H1 (cell line): ENCODE measurements at regions of chr17 and their contacts with region 1.

Region 1: DNA sequence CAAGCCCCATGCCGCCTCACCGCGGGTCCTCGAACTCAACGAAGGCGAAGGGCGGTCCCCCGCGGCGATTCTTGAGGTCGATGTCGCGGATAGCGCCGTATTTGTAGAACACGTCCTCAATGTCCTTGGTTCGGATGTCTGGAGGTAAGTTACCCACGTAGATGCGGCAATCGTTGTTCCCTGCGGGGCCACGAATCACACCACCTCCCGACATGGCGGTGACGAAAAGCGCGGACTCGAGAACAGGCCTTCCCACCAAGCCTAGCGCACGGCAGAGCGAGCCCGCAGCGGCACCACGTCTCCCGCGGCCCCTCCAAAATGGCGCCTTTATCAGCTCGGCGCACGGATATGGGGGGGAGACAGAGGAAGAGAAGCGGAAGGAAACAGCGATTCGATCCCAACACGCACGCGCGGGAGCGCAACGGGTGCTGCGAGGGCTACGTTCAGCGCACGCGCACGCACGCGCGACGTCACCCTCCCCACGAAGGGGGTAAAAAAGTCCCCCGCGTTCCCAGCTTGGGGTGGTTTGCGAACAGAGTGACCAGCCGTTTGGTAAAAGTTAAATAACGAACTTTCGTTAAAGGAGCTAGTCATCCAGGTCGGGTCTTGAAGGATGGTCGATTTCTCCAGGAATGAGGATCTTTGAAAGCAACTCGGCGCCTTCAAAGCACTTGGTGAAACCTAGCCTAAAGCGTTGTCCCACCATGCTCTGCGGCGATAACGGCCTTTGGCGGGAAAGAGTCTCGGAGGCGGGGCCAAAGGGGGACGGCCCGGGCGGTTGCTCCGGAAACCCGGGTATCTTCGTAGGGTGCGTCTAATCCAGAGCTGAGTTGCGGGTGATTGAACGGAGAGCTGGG is at the start of gene SRSF1:
- DNase-seq: peak; percentile 87 to 95
- H3K4me3 ChIP-seq: peak within 1 kb of the TSS; percentile 87 to 98 (median 94)
- H3K27ac ChIP-seq: peak within 1 kb of the TSS; percentile 100
- H3K4me1 ChIP-seq: peaks cover 0 to 11% (median 5%) of the 10 kb centered on the region in 4 experiments; a peak in 4 of 7 replicates
- H3K27me3 ChIP-seq: no peaks in the 10 kb centered on the region
- CTCF ChIP-seq: no peak
- EP300 ChIP-seq: peak; percentile 20 to 38; a peak in 1 of 3 replicates
- POLR2A ChIP-seq: peak; percentile 85 to 92
- RAD21 ChIP-seq: no peak; a peak in 1 of 4 replicates
- total RNA-seq, gene SRSF1: 429 and 433 TPM in 2 replicates

Region 2: GRCh38 chr17:57849874-57850754 is 157.0 kb before region 1 on chr17 and contains the start of gene MRPS23:
- CTCF ChIA-PET with region 1: interaction called, 384 read pairs
- POLR2A ChIA-PET with region 1: interaction called, 672 read pairs
- DNase-seq: peak; percentile 90 to 96
- H3K4me3 ChIP-seq: peak within 1 kb of the TSS; percentile 89 to 98 (median 94)
- H3K27ac ChIP-seq: peak within 1 kb of the TSS; percentile 63
- H3K4me1 ChIP-seq: peaks cover 0 to 7% (median 3%) of the 10 kb centered on the region in 4 experiments; a peak in 3 of 7 replicates
- H3K27me3 ChIP-seq: no peaks in the 10 kb centered on the region
- CTCF ChIP-seq: no peak
- EP300 ChIP-seq: peak in 1 of 2 experiments; percentile 92; a peak in 1 of 3 replicates
- POLR2A ChIP-seq: peak in 1 of 2 experiments; percentile 68; a peak in 2 of 3 replicates
- RAD21 ChIP-seq: no peak
- total RNA-seq, gene MRPS23: 60.4 and 73.4 TPM in 2 replicates

Region 3: DNA sequence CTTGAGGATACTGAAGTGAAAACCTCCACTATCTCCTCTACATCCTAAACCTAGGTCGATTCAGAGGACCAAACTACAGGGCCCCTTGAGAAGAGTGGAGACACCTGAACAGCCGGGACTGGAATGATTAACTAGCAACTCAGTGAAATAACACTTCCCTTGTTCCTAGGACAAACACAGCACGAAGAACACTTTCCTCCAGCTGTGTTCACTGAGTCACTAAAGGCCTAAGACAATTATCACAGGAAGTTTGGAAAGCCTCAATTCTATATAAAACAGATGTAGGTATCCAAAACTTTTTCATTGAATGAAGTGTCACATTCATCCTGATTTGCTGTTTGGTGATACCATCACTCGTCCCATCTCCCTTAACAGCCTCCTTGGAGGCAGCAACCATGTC is 36.4 kb before region 1 on chr17:
- CTCF ChIA-PET with region 1: no interaction called
- POLR2A ChIA-PET with region 1: interaction called, 11 read pairs
- DNase-seq: no peak
- H3K4me3 ChIP-seq: no peak overlapping the region
- H3K27ac ChIP-seq: no peak overlapping the region
- H3K4me1 ChIP-seq: peaks cover 0 to 3% (median 0%) of the 10 kb centered on the region in 4 experiments; a peak in 3 of 7 replicates
- H3K27me3 ChIP-seq: no peaks in the 10 kb centered on the region
- CTCF ChIP-seq: no peak
- EP300 ChIP-seq: no peak
- POLR2A ChIP-seq: no peak
- RAD21 ChIP-seq: no peak

Region 4: DNA sequence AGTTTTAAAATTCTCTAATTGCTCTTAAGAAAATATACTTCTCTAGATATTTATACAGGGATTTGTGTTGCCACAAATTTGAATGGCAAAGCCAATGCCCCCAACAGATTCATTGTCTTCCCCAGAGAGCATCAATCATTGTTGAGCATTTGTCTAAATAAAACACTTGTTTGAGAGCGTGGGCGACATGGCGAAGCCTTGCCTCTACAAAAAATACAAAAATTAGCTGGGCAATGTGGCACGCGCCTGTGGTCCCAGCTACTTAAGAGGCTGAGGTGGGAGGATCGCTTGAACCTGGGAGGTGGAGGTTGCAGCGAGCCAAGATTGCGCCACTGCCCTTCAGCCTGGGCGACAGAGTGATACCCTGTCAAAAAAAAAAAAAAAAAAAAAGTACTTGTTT is 13.2 kb after region 1 on chr17:
- CTCF ChIA-PET with region 1: interaction called, 3 read pairs
- POLR2A ChIA-PET with region 1: interaction called, 32 read pairs
- DNase-seq: no peak
- H3K4me3 ChIP-seq: no peak overlapping the region
- H3K27ac ChIP-seq: no peak overlapping the region
- H3K4me1 ChIP-seq: peaks cover 0 to 6% (median 2%) of the 10 kb centered on the region in 4 experiments; a peak in 2 of 7 replicates
- H3K27me3 ChIP-seq: no peaks in the 10 kb centered on the region
- CTCF ChIP-seq: no peak
- EP300 ChIP-seq: no peak
- POLR2A ChIP-seq: no peak
- RAD21 ChIP-seq: no peak

Region 5: GRCh38 chr17:58082870-58083490 is 75.8 kb after region 1 on chr17 and contains the start of gene DYNLL2:
- CTCF ChIA-PET with region 1: interaction called, 6 read pairs
- POLR2A ChIA-PET with region 1: interaction called, 292 read pairs
- DNase-seq: peak; percentile 84 to 89
- H3K4me3 ChIP-seq: peak within 1 kb of the TSS; percentile 78 to 91 (median 84)
- H3K27ac ChIP-seq: peak within 1 kb of the TSS; percentile 94
- H3K4me1 ChIP-seq: peaks cover 11 to 24% (median 18%) of the 10 kb centered on the region in 4 experiments
- H3K27me3 ChIP-seq: no peaks in the 10 kb centered on the region; a peak in 3 of 7 replicates
- CTCF ChIP-seq: no peak
- EP300 ChIP-seq: peak in 1 of 2 experiments; percentile 46; a peak in 1 of 3 replicates
- POLR2A ChIP-seq: peak; percentile 72 to 80
- RAD21 ChIP-seq: no peak
- total RNA-seq, gene DYNLL2: 49.7 and 52.7 TPM in 2 replicates